Endothelial cell of umbilical vein (primary cell): ENCODE measurements at regions of chr11 and their contacts with region 1.

Region 1: DNA sequence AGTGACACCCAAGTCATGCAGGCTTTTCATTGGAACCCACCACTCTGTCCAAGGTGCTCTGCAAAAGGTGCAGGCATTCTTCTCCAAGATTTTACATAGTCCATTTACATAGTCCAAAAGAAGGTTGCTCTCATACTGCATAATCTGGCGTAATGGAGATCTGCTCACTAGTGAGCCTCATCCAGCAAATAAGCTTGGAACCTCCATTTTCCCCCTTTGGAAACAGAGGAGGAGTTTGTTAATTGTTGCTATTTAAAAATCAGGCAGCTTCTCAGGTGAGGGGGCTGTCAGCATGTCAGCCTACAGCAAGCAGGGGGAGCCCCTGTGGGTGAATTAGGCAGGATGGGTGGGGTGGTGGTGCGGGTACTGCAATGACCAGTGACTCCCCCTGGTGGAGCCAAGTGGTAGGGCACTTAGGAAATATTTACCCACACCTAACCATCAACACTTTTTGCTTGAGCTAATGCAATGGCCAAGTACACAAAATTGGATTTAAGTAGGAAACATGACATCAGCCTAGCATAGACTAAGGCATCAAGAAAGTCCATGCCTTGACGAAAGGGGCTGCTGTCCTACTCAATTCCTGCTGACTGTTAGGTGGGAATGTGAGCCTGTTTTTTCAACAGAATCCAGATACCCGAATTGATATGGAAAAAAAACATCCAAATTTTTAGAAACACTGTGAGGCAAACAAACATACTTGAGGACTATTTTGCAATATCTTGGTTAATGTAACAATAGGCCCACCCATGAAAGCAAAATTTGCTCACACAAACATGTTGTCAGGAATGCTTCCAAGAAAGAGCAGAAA is 64.5 kb downstream of the AMBRA1 start:
- DNase-seq: peak; percentile 63
- H3K4me3 ChIP-seq: no peak overlapping the region
- H3K27ac ChIP-seq: no peak overlapping the region
- H3K4me1 ChIP-seq: no peaks in the 10 kb centered on the region
- H3K27me3 ChIP-seq: no peaks in the 10 kb centered on the region
- CTCF ChIP-seq: peak; percentile 90 to 95
- POLR2A ChIP-seq: no peak

Region 2: GRCh38 chr11:46392421-46393230 is 136.7 kb before region 1 on chr11:
- CTCF ChIA-PET with region 1: interaction called, 68 read pairs
- POLR2A ChIA-PET with region 1: no interaction called
- dilution Hi-C with region 1: no loop called
- intact Hi-C with region 1: loop called (anchors 1 kb)
- DNase-seq: peak; percentile 71
- H3K4me3 ChIP-seq: peak overlapping the region in 1 of 3 experiments; percentile 36
- H3K27ac ChIP-seq: no peak overlapping the region
- H3K4me1 ChIP-seq: peaks cover 3% of the 10 kb centered on the region
- H3K27me3 ChIP-seq: peaks cover 21 to 34% of the 10 kb centered on the region in 2 experiments
- CTCF ChIP-seq: no peak
- POLR2A ChIP-seq: no peak

Region 3: GRCh38 chr11:46431211-46431610 is 98.1 kb before region 1 on chr11:
- CTCF ChIA-PET with region 1: interaction called, 12 read pairs
- POLR2A ChIA-PET with region 1: no interaction called
- dilution Hi-C with region 1: no loop called
- intact Hi-C with region 1: no loop called
- DNase-seq: no peak
- H3K4me3 ChIP-seq: no peak overlapping the region
- H3K27ac ChIP-seq: no peak overlapping the region
- H3K4me1 ChIP-seq: no peaks in the 10 kb centered on the region
- H3K27me3 ChIP-seq: no peaks in the 10 kb centered on the region
- CTCF ChIP-seq: no peak
- POLR2A ChIP-seq: no peak

Region 4: DNA sequence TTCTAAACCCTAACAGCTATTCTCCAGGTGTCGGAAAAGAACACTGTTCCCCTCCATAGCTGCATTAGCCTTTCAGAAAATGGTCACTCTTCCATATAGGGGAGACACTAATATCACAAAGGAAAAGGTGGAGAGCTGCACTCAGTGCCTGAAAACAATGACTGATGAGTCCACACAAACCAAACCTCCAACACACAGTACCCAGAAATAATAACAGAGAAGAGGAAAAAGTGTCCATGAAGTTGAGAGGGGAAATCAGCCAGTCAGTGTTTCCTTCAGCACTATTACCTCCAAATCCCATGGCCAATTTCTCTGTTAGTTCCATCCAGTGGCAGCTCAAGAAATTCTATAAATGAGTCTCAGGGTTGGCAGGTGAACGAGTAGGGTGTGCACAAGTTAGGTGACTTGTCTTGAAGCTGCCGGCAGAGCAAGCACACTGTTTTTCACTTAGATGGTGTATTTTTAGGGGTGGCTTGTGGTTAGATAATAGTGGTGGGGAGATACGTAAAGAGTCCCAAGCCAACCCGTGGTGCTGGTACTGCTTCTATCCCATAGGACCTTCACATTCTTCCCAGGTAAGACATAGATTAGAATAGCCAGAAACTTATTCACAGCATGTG is 53.3 kb before region 1 on chr11:
- CTCF ChIA-PET with region 1: interaction called, 23 read pairs
- POLR2A ChIA-PET with region 1: no interaction called
- dilution Hi-C with region 1: no loop called
- intact Hi-C with region 1: no loop called
- DNase-seq: no peak
- H3K4me3 ChIP-seq: no peak overlapping the region
- H3K27ac ChIP-seq: no peak overlapping the region
- H3K4me1 ChIP-seq: no peaks in the 10 kb centered on the region
- H3K27me3 ChIP-seq: no peaks in the 10 kb centered on the region
- CTCF ChIP-seq: no peak
- POLR2A ChIP-seq: no peak

Region 5: DNA sequence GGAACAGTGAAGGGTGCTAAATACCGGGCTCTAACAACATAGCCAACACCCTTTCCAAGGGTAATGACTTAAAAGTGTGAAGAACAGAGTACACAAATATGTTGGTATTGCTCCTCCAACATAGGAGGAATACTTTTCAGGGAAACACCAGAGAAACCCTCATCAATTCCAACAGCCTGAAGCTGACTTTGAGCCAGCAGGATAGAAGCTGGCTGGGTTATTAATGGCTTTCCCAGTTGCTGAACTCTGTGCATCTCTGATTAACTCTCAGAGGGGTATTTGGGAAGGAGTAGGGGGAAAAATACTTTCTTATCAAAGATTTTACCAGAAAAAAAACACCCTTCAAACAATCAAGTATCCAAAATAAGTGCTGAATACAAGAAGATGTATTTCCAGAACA is 31.1 kb before region 1 on chr11:
- CTCF ChIA-PET with region 1: interaction called, 171 read pairs
- POLR2A ChIA-PET with region 1: no interaction called
- dilution Hi-C with region 1: no loop called
- intact Hi-C with region 1: no loop called
- DNase-seq: no peak
- H3K4me3 ChIP-seq: no peak overlapping the region
- H3K27ac ChIP-seq: no peak overlapping the region
- H3K4me1 ChIP-seq: peaks cover under 1% of the 10 kb centered on the region
- H3K27me3 ChIP-seq: no peaks in the 10 kb centered on the region
- CTCF ChIP-seq: no peak
- POLR2A ChIP-seq: no peak

Region 6: DNA sequence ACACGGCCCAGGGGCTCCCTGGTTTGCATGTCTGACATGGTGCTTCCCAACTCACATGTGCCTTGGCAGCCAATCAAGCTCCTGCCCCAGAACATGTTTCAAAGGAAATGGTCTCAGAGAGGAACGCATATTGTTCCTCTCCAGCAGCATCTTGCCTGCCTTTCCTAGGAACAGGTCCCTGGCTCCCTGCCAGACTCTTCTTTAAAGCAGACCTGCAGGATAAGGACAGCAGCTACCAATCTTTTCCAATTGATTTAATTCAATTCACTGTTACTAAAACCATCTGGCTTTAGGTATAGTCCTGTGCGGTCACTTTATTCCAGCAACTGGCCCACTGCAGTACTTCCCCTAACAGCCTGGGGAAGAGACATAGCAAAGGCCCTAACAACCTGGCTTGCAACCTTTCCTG is 15.4 kb before region 1 on chr11:
- CTCF ChIA-PET with region 1: interaction called, 24 read pairs
- POLR2A ChIA-PET with region 1: interaction called, 5 read pairs
- dilution Hi-C with region 1: no loop called
- intact Hi-C with region 1: no loop called
- DNase-seq: peak; percentile 84
- H3K4me3 ChIP-seq: no peak overlapping the region
- H3K27ac ChIP-seq: peak overlapping the region; percentile 7
- H3K4me1 ChIP-seq: peaks cover 12% of the 10 kb centered on the region
- H3K27me3 ChIP-seq: no peaks in the 10 kb centered on the region
- CTCF ChIP-seq: no peak
- POLR2A ChIP-seq: no peak

Region 7: GRCh38 chr11:46560300-46560991 is 31.1 kb after region 1 on chr11:
- CTCF ChIA-PET with region 1: interaction called, 11 read pairs
- POLR2A ChIA-PET with region 1: no interaction called
- dilution Hi-C with region 1: no loop called
- intact Hi-C with region 1: no loop called
- DNase-seq: peak; percentile 65
- H3K4me3 ChIP-seq: peak overlapping the region; percentile 15 to 61 (median 26)
- H3K27ac ChIP-seq: peak overlapping the region; percentile 61
- H3K4me1 ChIP-seq: peaks cover 31% of the 10 kb centered on the region
- H3K27me3 ChIP-seq: no peaks in the 10 kb centered on the region
- CTCF ChIP-seq: no peak
- POLR2A ChIP-seq: no peak